ENCODE measurements at regions of chr5 and their contacts with region 1.

Region 1: GRCh38 chr5:179806250-179807222 is at the start of gene MGAT4B:
- DNase-seq: peak in 1 of 2 experiments; percentile 78
- H3K4me3 ChIP-seq: peak within 1 kb of the TSS; percentile 58 to 78 (median 66)
- H3K27ac ChIP-seq: peak within 1 kb of the TSS; percentile 75; the same call in 1 of the 2 replicates
- H3K4me1 ChIP-seq: peaks cover 0 to 31% (median 28%) of the 10 kb centered on the region in 4 experiments; a peak in 6 of 7 replicates
- H3K27me3 ChIP-seq: no peaks in the 10 kb centered on the region
- CTCF ChIP-seq: no peak
- EP300 ChIP-seq: peak in 1 of 2 experiments; percentile 59; a peak in 1 of 3 replicates
- POLR2A ChIP-seq: peak in 1 of 2 experiments; percentile 35; a peak in 1 of 3 replicates
- RAD21 ChIP-seq: no peak
- total RNA-seq, gene MGAT4B: 112 and 116 TPM in 2 replicates

Region 2: DNA sequence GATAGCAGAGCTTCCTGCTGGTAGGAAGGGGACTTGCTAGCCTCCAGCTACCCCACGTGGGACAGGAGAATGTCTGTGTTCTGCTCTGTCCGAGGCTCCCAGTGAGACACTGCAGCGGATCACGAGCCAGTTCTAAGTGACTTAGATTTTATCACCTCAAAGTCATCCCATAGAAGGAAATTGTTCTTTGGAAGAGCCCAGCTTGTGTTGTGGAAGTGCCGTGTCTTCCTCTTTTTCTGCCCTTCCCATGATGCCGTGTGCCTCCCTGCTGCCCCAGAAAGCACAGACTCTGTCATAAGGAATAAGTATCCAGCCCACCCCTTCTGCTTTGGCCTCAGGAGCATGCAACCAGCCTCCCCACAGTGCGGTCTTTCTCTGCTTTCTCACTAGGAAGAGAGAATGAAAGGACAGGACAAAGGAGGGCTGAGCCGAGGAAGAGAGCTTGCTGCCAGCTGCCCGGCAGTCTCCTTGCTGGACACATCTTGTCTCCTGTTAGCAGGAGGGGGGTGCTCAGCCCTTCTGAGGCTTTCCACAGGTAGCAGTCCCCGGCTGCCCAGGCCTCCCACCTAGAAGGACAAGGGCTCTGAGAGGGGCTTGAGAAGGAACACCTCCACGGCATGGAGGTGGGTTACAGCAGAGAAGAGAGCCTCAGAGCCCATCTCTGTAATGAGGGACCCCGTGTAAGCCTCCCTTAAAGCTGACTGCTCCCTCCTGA is 220.4 kb before region 1 on chr5:
- CTCF ChIA-PET with region 1: no interaction called
- POLR2A ChIA-PET with region 1: no interaction called
- DNase-seq: no peak
- H3K4me3 ChIP-seq: no peak overlapping the region
- H3K27ac ChIP-seq: no peak overlapping the region
- H3K4me1 ChIP-seq: no peaks in the 10 kb centered on the region
- H3K27me3 ChIP-seq: no peaks in the 10 kb centered on the region
- CTCF ChIP-seq: no peak
- EP300 ChIP-seq: no peak
- POLR2A ChIP-seq: no peak
- RAD21 ChIP-seq: no peak

Region 3: GRCh38 chr5:179768326-179769085 is 38.0 kb before region 1 on chr5:
- CTCF ChIA-PET with region 1: interaction called, 19 read pairs
- POLR2A ChIA-PET with region 1: no interaction called
- DNase-seq: no peak
- H3K4me3 ChIP-seq: no peak overlapping the region
- H3K27ac ChIP-seq: no peak overlapping the region
- H3K4me1 ChIP-seq: peaks cover under 1 to 8% (median 1%) of the 10 kb centered on the region in 4 experiments; a peak in 5 of 7 replicates
- H3K27me3 ChIP-seq: no peaks in the 10 kb centered on the region
- CTCF ChIP-seq: peak; percentile 55 to 67 (median 57)
- EP300 ChIP-seq: no peak
- POLR2A ChIP-seq: no peak
- RAD21 ChIP-seq: peak; percentile 19 to 48; a peak in 2 of 4 replicates

Region 4: GRCh38 chr5:179795863-179796833 is 10.4 kb before region 1 on chr5:
- CTCF ChIA-PET with region 1: interaction called, 9 read pairs
- POLR2A ChIA-PET with region 1: interaction called, 207 read pairs
- DNase-seq: peak in 1 of 2 experiments; percentile 85
- H3K4me3 ChIP-seq: peak overlapping the region; percentile 61 to 88 (median 64)
- H3K27ac ChIP-seq: no peak overlapping the region
- H3K4me1 ChIP-seq: peaks cover 0 to 14% (median 9%) of the 10 kb centered on the region in 4 experiments; a peak in 5 of 7 replicates
- H3K27me3 ChIP-seq: peaks cover 0 to 2% (median 0%) of the 10 kb centered on the region in 4 experiments; a peak in 1 of 7 replicates
- CTCF ChIP-seq: peak in 2 of 3 experiments; percentile 64 to 72; a peak in 3 of 4 replicates
- EP300 ChIP-seq: peak in 1 of 2 experiments; percentile 16; a peak in 1 of 3 replicates
- POLR2A ChIP-seq: peak in 1 of 2 experiments; percentile 44; a peak in 2 of 3 replicates
- RAD21 ChIP-seq: peak; percentile 35 to 64

Region 5: GRCh38 chr5:179821581-179822432 is 15.3 kb after region 1 on chr5:
- CTCF ChIA-PET with region 1: interaction called, 6 read pairs
- POLR2A ChIA-PET with region 1: interaction called, 207 read pairs
- DNase-seq: peak in 1 of 2 experiments; percentile 80
- H3K4me3 ChIP-seq: peak overlapping the region; percentile 75 to 91 (median 83)
- H3K27ac ChIP-seq: peak overlapping the region; percentile 91; the same call in 1 of the 2 replicates
- H3K4me1 ChIP-seq: peaks cover 4 to 38% (median 33%) of the 10 kb centered on the region in 4 experiments
- H3K27me3 ChIP-seq: no peaks in the 10 kb centered on the region; a peak in 2 of 7 replicates
- CTCF ChIP-seq: 0 out of 4 replicates have a peak, but pooled peaks of 1 of the 3 experiments have one; percentile 11
- EP300 ChIP-seq: no peak
- POLR2A ChIP-seq: 0 out of 3 replicates have a peak, but pooled peaks of 1 of the 2 experiments have one; percentile 35
- RAD21 ChIP-seq: no peak

Region 6: DNA sequence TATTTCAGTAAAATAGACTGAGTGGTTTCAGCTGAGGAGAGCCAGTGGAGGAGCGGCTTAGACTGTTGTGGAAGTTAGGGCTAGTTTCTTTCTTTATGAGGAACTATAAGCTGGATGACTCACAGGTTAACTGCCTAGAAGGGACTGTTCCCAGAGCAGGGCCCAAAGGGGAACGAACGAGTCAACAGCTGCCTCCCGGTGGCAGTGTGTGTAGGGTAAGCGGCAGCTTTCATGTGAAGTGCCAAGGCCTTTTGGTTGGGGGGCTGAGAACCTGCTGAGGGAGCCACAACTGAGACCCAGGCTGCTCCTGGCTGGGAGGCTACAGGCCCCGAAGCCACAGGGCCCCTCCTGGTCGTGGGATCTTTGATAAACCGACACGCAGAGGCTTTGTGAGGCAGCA is 21.1 kb after region 1 on chr5:
- CTCF ChIA-PET with region 1: interaction called, 11 read pairs
- POLR2A ChIA-PET with region 1: interaction called, 207 read pairs
- DNase-seq: no peak
- H3K4me3 ChIP-seq: no peak overlapping the region
- H3K27ac ChIP-seq: no peak overlapping the region
- H3K4me1 ChIP-seq: peaks cover 2 to 5% (median 3%) of the 10 kb centered on the region in 4 experiments; a peak in 6 of 7 replicates
- H3K27me3 ChIP-seq: no peaks in the 10 kb centered on the region
- CTCF ChIP-seq: no peak
- EP300 ChIP-seq: no peak
- POLR2A ChIP-seq: peak in 1 of 2 experiments; percentile 41; a peak in 1 of 3 replicates
- RAD21 ChIP-seq: 0 out of 4 replicates have a peak, but pooled peaks of 1 of the 2 experiments have one; percentile 5

Region 7: DNA sequence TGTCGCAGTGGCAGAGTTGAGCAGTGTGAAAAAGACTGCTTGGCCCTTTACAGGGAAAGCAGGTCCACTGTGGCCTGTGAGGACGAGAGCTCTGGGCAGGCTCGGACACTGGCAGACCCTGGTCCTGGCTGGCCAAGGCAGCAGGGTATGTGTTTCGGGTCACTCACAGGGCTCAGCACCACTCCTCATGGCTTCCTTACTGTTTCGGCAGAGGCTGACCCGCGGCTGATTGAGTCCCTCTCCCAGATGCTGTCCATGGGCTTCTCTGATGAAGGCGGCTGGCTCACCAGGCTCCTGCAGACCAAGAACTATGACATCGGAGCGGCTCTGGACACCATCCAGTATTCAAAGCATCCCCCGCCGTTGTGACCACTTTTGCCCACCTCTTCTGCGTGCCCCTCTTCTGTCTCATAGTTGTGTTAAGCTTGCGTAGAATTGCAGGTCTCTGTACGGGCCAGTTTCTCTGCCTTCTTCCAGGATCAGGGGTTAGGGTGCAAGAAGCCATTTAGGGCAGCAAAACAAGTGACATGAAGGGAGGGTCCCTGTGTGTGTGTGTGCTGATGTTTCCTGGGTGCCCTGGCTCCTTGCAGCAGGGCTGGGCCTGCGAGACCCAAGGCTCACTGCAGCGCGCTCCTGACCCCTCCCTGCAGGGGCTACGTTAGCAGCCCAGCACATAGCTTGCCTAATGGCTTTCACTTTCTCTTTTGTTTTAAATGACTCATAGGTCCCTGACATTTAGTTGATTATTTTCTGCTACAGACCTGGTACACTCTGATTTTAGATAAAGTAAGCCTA is 29.9 kb after region 1 on chr5:
- CTCF ChIA-PET with region 1: interaction called, 13 read pairs
- POLR2A ChIA-PET with region 1: interaction called, 4 read pairs
- DNase-seq: no peak
- H3K4me3 ChIP-seq: no peak overlapping the region
- H3K27ac ChIP-seq: no peak overlapping the region
- H3K4me1 ChIP-seq: no peaks in the 10 kb centered on the region
- H3K27me3 ChIP-seq: no peaks in the 10 kb centered on the region
- CTCF ChIP-seq: 0 out of 4 replicates have a peak, but pooled peaks of 1 of the 3 experiments have one; percentile 11
- EP300 ChIP-seq: no peak
- POLR2A ChIP-seq: peak; percentile 13 to 32; a peak in 1 of 3 replicates
- RAD21 ChIP-seq: peak in 1 of 2 experiments; percentile 14; a peak in 1 of 4 replicates

Region 8: GRCh38 chr5:180090098-180090768 is 283.7 kb after region 1 on chr5:
- CTCF ChIA-PET with region 1: no interaction called
- POLR2A ChIA-PET with region 1: no interaction called
- DNase-seq: peak; percentile 80 to 95
- H3K4me3 ChIP-seq: peak overlapping the region; percentile 13 to 62 (median 24); a peak in 7 of 8 replicates
- H3K27ac ChIP-seq: peak overlapping the region; percentile 84
- H3K4me1 ChIP-seq: peaks cover 1 to 14% (median 9%) of the 10 kb centered on the region in 4 experiments
- H3K27me3 ChIP-seq: no peaks in the 10 kb centered on the region
- CTCF ChIP-seq: peak; percentile 69 to 87 (median 80)
- EP300 ChIP-seq: peak in 1 of 2 experiments; percentile 57; a peak in 1 of 3 replicates
- POLR2A ChIP-seq: peak in 1 of 2 experiments; percentile 52; a peak in 2 of 3 replicates
- RAD21 ChIP-seq: peak; percentile 72 to 76

Region 9: GRCh38 chr5:180142824-180143610 is 336.5 kb after region 1 on chr5:
- CTCF ChIA-PET with region 1: no interaction called
- POLR2A ChIA-PET with region 1: no interaction called
- DNase-seq: no peak
- H3K4me3 ChIP-seq: no peak overlapping the region
- H3K27ac ChIP-seq: no peak overlapping the region
- H3K4me1 ChIP-seq: no peaks in the 10 kb centered on the region
- H3K27me3 ChIP-seq: no peaks in the 10 kb centered on the region
- CTCF ChIP-seq: no peak
- EP300 ChIP-seq: no peak
- POLR2A ChIP-seq: no peak
- RAD21 ChIP-seq: no peak